Aorta (tissue), 5 donors: ENCODE measurements at regions of chr5 and their contacts with region 1.

Region 1: GRCh38 chr5:146860213-146860893 is 18.2 kb downstream of the PPP2R2B start:
- DNase-seq: no peak
- ATAC-seq: no peak
- H3K4me3 ChIP-seq: no peak overlapping the region
- H3K27ac ChIP-seq: no peak overlapping the region
- H3K4me1 ChIP-seq: peaks cover 0 to 3% of the 10 kb centered on the region in 2 donors
- H3K27me3 ChIP-seq: no peaks in the 10 kb centered on the region

Region 2: DNA sequence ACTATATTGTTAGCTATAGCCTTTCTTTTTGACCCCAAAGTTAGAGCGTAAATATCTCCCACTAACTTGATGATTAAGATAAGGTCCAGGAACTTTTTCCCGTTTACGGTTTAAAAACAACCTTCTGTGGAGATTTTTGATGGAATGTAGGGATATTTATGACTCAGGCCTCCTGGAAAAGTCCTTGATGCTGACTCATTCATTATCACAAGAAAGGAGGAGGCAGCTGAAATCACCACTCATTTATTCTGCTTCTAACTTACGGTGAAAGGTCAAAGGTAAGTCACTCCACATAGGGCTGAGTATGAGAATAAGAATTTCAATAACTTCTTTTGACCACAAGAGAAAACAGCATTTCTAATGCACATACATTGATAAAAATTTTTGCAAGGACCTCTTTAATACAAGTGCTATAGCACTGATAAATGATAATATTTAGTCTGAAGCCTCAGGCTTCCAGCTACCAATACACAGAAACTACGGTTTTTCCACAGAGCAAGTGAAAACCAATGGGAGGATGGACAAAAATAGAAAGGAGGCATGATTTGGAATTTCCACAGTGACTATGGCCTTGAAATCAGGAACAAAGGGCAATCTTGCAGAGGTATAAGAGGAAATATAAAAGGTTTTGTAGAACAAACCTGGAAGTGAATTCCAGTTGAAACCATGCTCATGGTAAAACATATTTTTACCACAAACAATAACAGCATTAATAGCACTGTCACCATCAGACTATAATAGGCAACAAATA is 128.3 kb before region 1 on chr5:
- intact Hi-C with region 1: loop called in 1 of 2 experiments (anchors 10 kb)
- DNase-seq: no peak
- ATAC-seq: no peak
- H3K4me3 ChIP-seq: no peak overlapping the region
- H3K27ac ChIP-seq: no peak overlapping the region
- H3K4me1 ChIP-seq: peaks cover 0 to 5% of the 10 kb centered on the region in 2 donors
- H3K27me3 ChIP-seq: no peaks in the 10 kb centered on the region

Region 3: DNA sequence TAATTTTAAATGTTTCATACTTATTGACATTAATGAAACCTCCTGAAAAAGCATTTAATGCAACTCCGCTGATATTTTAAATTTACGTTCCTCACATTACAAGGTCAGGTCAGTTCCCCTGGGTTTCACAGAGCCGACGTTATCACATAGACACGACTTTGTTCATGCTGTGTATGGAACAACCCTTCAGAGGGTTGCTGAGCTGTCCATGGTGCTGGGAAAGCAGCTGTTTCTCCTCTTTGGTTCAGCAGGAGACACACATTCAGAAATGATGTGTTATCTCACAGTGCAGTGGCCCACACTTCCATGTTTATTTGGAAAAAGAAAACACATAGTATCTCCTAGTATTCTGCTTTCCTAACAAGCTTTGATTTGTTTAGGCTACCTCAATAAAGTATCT is 35.3 kb before region 1 on chr5:
- intact Hi-C with region 1: loop called in 1 of 2 experiments (anchors 5 kb)
- DNase-seq: peak; percentile 52 to 79
- ATAC-seq: no peak
- H3K4me3 ChIP-seq: no peak overlapping the region
- H3K27ac ChIP-seq: no peak overlapping the region
- H3K4me1 ChIP-seq: peaks cover 0 to 5% of the 10 kb centered on the region in 2 donors
- H3K27me3 ChIP-seq: no peaks in the 10 kb centered on the region

Region 4: DNA sequence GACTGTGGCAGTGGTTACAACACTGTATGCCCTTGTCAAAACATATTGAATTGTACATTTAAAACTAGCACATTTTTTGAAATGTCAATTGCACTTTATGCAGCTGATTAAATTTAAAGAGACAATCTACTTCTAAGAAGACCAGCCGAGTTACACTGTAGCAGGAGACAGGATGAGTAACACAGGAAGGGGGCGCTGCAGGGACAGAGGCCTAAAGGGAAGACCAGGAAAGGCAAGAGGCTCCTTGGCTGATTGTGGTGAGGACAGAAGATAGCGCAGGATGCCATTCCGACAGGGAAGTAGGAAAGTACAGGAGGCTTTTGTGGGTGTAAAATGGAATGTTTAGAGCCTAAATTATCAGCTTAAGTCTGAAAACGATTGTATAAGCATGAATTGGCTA is 46.5 kb after region 1 on chr5:
- intact Hi-C with region 1: no loop called
- DNase-seq: no peak
- ATAC-seq: no peak
- H3K4me3 ChIP-seq: no peak overlapping the region
- H3K27ac ChIP-seq: no peak overlapping the region
- H3K4me1 ChIP-seq: no peaks in the 10 kb centered on the region
- H3K27me3 ChIP-seq: no peaks in the 10 kb centered on the region

Region 5: DNA sequence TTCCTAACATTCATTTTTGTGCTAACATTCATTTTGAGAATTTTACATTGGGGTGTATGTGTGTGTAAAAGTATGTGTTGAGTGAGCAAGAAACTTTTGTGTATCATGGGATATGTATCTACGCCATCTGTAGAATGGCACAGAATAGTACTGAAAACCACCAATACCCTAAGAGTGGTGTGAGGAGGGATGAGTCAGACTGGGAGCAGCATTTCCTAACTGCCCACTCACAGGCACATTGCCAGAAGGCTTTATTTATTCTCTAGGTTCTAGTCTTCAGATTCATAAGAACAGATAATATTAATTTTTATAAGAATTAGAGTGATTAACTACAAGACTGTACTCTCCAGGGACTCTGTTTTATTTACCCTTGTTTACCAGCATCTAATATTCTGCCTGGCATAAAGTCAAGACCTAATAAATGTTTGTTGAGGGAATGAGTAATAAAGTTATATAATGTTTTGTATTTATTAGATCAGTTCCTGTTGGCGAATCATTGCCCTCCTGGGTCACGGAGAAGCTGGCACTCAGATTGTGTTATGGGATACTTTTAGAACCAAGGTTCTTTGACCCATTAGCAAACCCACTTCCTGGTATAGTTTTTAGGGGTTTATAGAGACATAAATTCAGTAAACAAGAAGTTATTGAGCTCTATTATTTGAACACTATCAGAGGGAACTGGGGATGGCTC is 177.3 kb after region 1 on chr5:
- intact Hi-C with region 1: no loop called
- DNase-seq: no peak
- ATAC-seq: no peak
- H3K4me3 ChIP-seq: no peak overlapping the region
- H3K27ac ChIP-seq: no peak overlapping the region
- H3K4me1 ChIP-seq: no peaks in the 10 kb centered on the region
- H3K27me3 ChIP-seq: no peaks in the 10 kb centered on the region